ENCODE measurements at regions of chr1 and their contacts with region 1.

Region 1: GRCh38 chr1:179121159-179121938 is 39.5 kb downstream of the TOR3A start:
- DNase-seq: peak; percentile 40 to 64
- ATAC-seq: peak; percentile 75 to 79; a peak in 5 of 6 replicates
- H3K4me3 ChIP-seq: no peak overlapping the region
- H3K27ac ChIP-seq: peak overlapping the region in 1 of 2 experiments; percentile 53; a peak in 3 of 6 replicates
- H3K4me1 ChIP-seq: peaks cover 19% of the 10 kb centered on the region
- CTCF ChIP-seq: peak; percentile 93
- EP300 ChIP-seq: no peak
- POLR2A ChIP-seq: no peak
- RAD21 ChIP-seq: peak; percentile 83 to 88

Region 2: GRCh38 chr1:179081687-179082332 is 39.5 kb before region 1 on chr1 and contains the start of gene TOR3A:
- CTCF ChIA-PET with region 1: interaction called, 20 read pairs
- POLR2A ChIA-PET with region 1: interaction called, 3 read pairs
- DNase-seq: peak; percentile 83 to 88
- ATAC-seq: peak; percentile 81 to 92
- H3K4me3 ChIP-seq: peak within 1 kb of the TSS; percentile 77
- H3K27ac ChIP-seq: peak within 1 kb of the TSS; percentile 87 to 95
- H3K4me1 ChIP-seq: peaks cover 23% of the 10 kb centered on the region; the same call in 1 of the 3 replicates
- CTCF ChIP-seq: no peak
- EP300 ChIP-seq: no peak
- POLR2A ChIP-seq: peak; percentile 88
- RAD21 ChIP-seq: no peak
- polyA plus RNA-seq, gene TOR3A: 30.7 and 41.0 TPM in 2 replicates

Region 3: DNA sequence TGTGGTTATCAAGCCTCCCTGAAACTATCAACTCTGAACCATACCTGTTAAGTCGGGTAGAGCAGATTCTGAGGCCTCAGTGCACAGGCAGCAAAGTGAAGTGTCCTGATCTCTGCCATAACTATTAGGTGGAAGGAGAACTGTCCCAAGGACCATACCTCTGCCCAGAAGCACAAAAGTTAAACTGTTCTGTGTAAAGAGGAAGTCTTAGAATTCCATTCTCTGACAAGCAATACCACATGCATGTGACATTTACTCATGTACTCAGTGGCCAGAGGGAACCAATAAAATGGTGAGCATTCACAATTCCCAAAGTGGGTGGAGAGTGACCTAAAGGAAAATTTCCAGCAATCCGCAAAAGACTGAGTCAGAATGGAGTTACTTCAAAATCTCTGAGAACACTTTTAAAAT is 21.5 kb after region 1 on chr1:
- CTCF ChIA-PET with region 1: interaction called, 15 read pairs
- POLR2A ChIA-PET with region 1: interaction called, 3 read pairs
- DNase-seq: peak; percentile 66 to 88
- ATAC-seq: peak; percentile 94 to 97
- H3K4me3 ChIP-seq: peak overlapping the region; percentile 39
- H3K27ac ChIP-seq: peak overlapping the region; percentile 59 to 82
- H3K4me1 ChIP-seq: peaks cover 45% of the 10 kb centered on the region
- CTCF ChIP-seq: no peak
- EP300 ChIP-seq: no peak
- POLR2A ChIP-seq: no peak
- RAD21 ChIP-seq: no peak

Region 4: GRCh38 chr1:179175011-179175841 is 53.9 kb after region 1 on chr1:
- CTCF ChIA-PET with region 1: interaction called, 22 read pairs
- POLR2A ChIA-PET with region 1: no interaction called
- DNase-seq: peak in 1 of 2 experiments; percentile 56
- ATAC-seq: peak; percentile 56 to 73; a peak in 5 of 6 replicates
- H3K4me3 ChIP-seq: no peak overlapping the region
- H3K27ac ChIP-seq: peak overlapping the region; percentile 40 to 44; a peak in 4 of 6 replicates
- H3K4me1 ChIP-seq: peaks cover 37% of the 10 kb centered on the region
- CTCF ChIP-seq: no peak
- EP300 ChIP-seq: no peak
- POLR2A ChIP-seq: no peak
- RAD21 ChIP-seq: no peak

Region 5: GRCh38 chr1:179190861-179191260 is 69.5 kb after region 1 on chr1:
- CTCF ChIA-PET with region 1: interaction called, 32 read pairs
- POLR2A ChIA-PET with region 1: no interaction called
- DNase-seq: no peak
- ATAC-seq: no peak
- H3K4me3 ChIP-seq: no peak overlapping the region
- H3K27ac ChIP-seq: no peak overlapping the region
- H3K4me1 ChIP-seq: peaks cover 18% of the 10 kb centered on the region
- CTCF ChIP-seq: no peak
- EP300 ChIP-seq: no peak
- POLR2A ChIP-seq: no peak
- RAD21 ChIP-seq: no peak

Region 6: DNA sequence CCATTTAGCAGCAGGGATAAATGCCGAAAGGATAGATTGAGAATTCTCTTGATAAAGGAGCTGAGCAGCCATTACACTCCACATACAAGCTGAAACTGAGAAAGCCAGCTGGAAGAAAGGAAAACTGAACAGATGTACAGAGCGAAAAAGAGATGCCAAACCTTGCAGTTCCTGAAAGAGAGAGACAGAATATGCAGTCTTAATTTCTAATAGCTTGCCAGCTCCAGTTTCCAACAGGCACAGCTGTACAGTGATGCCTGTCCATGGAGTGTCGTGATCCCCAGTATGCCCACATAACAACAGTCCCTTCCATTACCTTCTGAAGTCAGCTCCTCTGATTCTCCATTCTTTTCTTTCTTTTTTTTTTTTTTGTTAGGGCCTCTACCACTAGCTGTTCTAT is 85.5 kb after region 1 on chr1:
- CTCF ChIA-PET with region 1: interaction called, 19 read pairs
- POLR2A ChIA-PET with region 1: no interaction called
- DNase-seq: no peak
- ATAC-seq: peak in 1 of 2 experiments; percentile 30; a peak in 1 of 6 replicates
- H3K4me3 ChIP-seq: no peak overlapping the region
- H3K27ac ChIP-seq: no peak overlapping the region
- H3K4me1 ChIP-seq: peaks cover 28% of the 10 kb centered on the region
- CTCF ChIP-seq: no peak
- EP300 ChIP-seq: no peak
- POLR2A ChIP-seq: no peak
- RAD21 ChIP-seq: no peak

Region 7: GRCh38 chr1:179293340-179294327 is 172.3 kb after region 1 on chr1 and contains the start of gene SOAT1:
- CTCF ChIA-PET with region 1: interaction called, 25 read pairs
- POLR2A ChIA-PET with region 1: interaction called, 5 read pairs
- DNase-seq: peak; percentile 94
- ATAC-seq: peak; percentile 96
- H3K4me3 ChIP-seq: peak within 1 kb of the TSS; percentile 76
- H3K27ac ChIP-seq: peak within 1 kb of the TSS; percentile 85 to 92
- H3K4me1 ChIP-seq: peaks cover 28% of the 10 kb centered on the region
- CTCF ChIP-seq: no peak
- EP300 ChIP-seq: no peak
- POLR2A ChIP-seq: peak; percentile 88
- RAD21 ChIP-seq: no peak
- polyA plus RNA-seq, gene SOAT1: 50.3 and 62.1 TPM in 2 replicates